ENCODE measurements at regions of chr9 and their contacts with region 1.

Region 1: GRCh38 chr9:96217754-96218693 is 84.0 kb downstream of the HSD17B3 start:
- DNase-seq: peak; percentile 59 to 82
- ATAC-seq: peak; percentile 89 to 95 (median 92)
- H3K4me3 ChIP-seq: peak overlapping the region in 9 of 10 donors; percentile 12 to 48 (median 40)
- H3K27ac ChIP-seq: peak overlapping the region in 9 of 10 donors; percentile 13 to 76 (median 37)
- H3K4me1 ChIP-seq: peaks cover 5 to 34% (median 20%) of the 10 kb centered on the region in 9 donors
- H3K27me3 ChIP-seq: peaks cover 0 to 57% (median 49%) of the 10 kb centered on the region in 7 donors
- CTCF ChIP-seq: peak; percentile 93 to 99 (median 96)

Region 2: DNA sequence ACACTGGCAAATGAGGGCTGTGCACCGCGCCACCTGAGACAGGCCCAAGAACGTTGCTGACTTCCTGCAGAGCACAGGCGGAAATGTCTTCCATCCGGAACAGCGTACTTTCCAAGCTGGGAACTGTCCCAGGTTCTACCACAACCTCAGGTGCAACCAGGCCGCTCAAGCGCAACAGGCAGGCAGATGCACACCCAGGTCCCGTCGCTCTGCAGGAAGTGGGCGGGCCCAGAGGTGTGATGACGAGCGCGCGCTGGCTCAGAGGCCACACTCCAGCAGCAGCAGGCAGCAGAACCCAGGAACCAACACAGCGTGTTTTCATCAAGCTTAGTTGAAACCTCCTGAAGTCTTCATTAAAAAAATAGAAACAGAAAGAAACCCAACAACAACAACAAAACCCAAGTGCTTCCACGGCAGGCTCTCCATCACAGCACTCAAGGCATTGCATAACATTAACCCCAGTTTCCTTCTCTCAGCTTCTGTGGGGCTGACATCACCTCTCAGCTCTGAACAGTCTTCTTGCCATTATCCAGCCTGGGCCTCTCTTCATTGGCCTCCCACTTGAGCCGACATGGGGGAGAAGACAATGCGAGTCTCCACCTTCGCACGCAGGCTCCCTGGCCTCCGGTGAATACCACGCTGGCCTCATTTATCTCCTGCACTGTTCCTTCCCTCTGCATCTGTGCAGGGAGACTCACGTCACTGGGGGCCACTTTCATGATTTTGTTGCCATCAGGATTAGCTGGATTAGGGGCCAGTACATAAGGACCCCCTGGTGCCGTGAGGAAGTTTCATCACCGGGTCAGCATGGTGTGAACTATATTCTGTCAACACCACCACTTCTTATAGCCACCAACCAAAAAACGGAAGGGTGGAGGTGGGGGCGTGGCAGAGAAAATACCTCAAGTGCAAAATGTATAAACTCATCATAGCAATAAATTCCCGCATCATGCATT is 723.3 kb before region 1 on chr9:
- intact Hi-C with region 1: loop called in 1 of 10 experiments (anchors 10 kb)
- DNase-seq: no peak
- ATAC-seq: peak in 5 of 8 donors; percentile 13 to 55 (median 26)
- H3K4me3 ChIP-seq: no peak overlapping the region
- H3K27ac ChIP-seq: peak overlapping the region in 1 of 10 donors; percentile 68
- H3K4me1 ChIP-seq: peaks cover 0 to 35% (median 8%) of the 10 kb centered on the region in 9 donors
- H3K27me3 ChIP-seq: peaks cover 0 to 4% (median 0%) of the 10 kb centered on the region in 7 donors
- CTCF ChIP-seq: no peak

Region 3: GRCh38 chr9:95726756-95727155 is 491.3 kb before region 1 on chr9:
- intact Hi-C with region 1: loop called in 9 of 10 experiments (anchors 2 to 10 kb)
- DNase-seq: no peak
- ATAC-seq: peak in 6 of 8 donors; percentile 42 to 53 (median 44)
- H3K4me3 ChIP-seq: no peak overlapping the region
- H3K27ac ChIP-seq: no peak overlapping the region
- H3K4me1 ChIP-seq: peaks cover 0 to 5% (median 0%) of the 10 kb centered on the region in 9 donors
- H3K27me3 ChIP-seq: peaks cover 0 to 21% (median 0%) of the 10 kb centered on the region in 7 donors
- CTCF ChIP-seq: peak; percentile 44 to 78 (median 71)

Region 4: DNA sequence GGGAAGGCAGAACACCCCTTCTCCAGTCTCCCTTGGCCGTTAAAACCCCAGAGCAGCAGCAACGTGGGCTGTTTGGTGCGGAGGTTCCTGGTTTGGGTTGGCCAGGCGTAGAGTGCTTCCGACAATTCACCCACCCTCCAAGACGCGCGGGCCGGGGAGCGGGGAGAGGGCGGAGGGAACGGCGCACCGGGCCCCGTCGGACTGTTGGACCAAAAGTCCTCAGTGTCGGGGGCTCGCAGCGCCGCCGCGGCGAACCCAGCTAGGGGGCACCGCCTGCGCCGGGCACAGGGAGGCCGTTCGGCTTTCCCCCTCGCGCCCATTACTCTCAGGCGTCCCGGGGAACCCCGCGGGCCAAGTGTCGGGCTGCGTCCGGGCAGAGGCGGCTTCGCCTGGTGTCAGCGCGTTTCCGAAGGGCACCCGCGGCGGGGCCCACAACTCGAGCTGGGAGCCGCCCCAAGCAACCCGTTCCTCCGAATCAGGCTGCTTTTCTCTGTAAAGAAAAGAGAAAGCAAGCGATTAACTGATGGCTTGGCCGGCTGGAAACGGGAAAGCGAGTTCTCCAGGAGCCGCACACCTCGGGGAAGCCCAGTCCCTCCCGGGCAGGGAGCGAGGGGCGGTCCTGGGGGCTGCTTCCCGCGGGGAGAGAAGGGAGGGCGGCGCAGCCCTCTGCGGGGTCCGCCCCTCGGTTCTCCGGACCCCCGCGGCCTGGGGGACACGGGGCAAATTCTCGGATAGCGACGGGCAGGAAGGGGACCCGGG is 197.1 kb before region 1 on chr9:
- intact Hi-C with region 1: loop called in 1 of 10 experiments (anchors 10 kb)
- DNase-seq: peak; percentile 39 to 46
- ATAC-seq: peak; percentile 53 to 76 (median 66)
- H3K4me3 ChIP-seq: peak overlapping the region; percentile 44 to 80 (median 62)
- H3K27ac ChIP-seq: peak overlapping the region; percentile 48 to 83 (median 72)
- H3K4me1 ChIP-seq: peaks cover 7 to 33% (median 25%) of the 10 kb centered on the region in 9 donors
- H3K27me3 ChIP-seq: peaks cover 0 to 72% (median 45%) of the 10 kb centered on the region in 7 donors
- CTCF ChIP-seq: no peak

Region 5: DNA sequence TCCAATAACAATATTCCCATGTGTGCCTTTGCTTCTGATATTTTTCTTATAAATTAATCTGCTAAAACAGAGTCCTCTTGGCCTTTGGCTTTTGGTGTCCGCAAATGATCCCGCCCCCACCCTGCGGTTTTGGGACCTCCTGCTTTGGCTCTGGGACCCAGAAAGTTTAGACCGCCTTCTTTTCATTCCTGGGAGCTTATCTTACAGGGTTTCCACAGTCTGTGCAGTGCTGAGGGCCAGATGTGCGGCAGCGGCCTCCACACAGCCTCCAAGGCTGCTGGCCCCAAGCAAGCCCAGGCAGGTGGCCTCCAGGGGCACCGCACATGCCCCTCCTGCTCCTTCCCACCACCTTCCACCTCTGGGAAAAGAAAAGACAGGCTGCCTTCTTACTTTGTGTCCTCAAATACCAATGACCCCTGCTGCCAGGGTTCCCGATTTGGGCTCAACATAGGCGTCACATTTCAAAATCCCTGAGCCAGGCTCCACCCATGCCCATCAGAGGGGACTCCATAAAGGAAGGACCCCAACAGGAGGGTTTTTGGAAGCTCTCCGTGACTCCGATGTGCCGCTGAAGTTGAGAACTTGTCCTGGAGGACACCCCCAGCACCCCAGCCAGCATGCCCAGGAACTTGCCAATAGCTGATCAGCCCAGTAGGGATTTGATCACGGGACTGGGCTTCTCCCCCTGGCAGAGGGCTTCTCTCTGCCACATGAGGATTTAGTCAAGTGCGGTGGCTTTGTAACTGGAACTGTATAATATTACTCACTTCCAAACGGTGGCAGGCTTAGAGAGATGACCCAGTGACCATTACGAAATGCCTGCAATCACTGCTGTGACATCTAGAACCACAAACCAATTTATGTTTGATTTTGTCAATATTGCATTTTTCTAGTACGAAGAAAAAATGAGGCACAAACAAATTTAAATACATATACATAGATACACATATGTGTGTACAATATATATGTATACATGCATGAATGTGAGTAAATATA is 150.7 kb before region 1 on chr9:
- intact Hi-C with region 1: loop called in 2 of 10 experiments (anchors 5 to 10 kb)
- DNase-seq: peak; percentile 50 to 57
- ATAC-seq: peak; percentile 37 to 84 (median 65)
- H3K4me3 ChIP-seq: no peak overlapping the region
- H3K27ac ChIP-seq: peak overlapping the region in 4 of 10 donors; percentile 5 to 27 (median 10)
- H3K4me1 ChIP-seq: peaks cover 0 to 14% (median 3%) of the 10 kb centered on the region in 9 donors
- H3K27me3 ChIP-seq: peaks cover 0 to 7% (median 0%) of the 10 kb centered on the region in 7 donors
- CTCF ChIP-seq: no peak

Region 6: GRCh38 chr9:96169484-96169883 is 48.5 kb before region 1 on chr9:
- intact Hi-C with region 1: no loop called
- DNase-seq: peak in 1 of 2 donors; percentile 35
- ATAC-seq: peak in 2 of 8 donors; percentile 13 to 34
- H3K4me3 ChIP-seq: no peak overlapping the region
- H3K27ac ChIP-seq: peak overlapping the region in 1 of 10 donors; percentile 56
- H3K4me1 ChIP-seq: no peaks in the 10 kb centered on the region
- H3K27me3 ChIP-seq: peaks cover 0 to 67% (median 21%) of the 10 kb centered on the region in 7 donors
- CTCF ChIP-seq: no peak

Region 7: DNA sequence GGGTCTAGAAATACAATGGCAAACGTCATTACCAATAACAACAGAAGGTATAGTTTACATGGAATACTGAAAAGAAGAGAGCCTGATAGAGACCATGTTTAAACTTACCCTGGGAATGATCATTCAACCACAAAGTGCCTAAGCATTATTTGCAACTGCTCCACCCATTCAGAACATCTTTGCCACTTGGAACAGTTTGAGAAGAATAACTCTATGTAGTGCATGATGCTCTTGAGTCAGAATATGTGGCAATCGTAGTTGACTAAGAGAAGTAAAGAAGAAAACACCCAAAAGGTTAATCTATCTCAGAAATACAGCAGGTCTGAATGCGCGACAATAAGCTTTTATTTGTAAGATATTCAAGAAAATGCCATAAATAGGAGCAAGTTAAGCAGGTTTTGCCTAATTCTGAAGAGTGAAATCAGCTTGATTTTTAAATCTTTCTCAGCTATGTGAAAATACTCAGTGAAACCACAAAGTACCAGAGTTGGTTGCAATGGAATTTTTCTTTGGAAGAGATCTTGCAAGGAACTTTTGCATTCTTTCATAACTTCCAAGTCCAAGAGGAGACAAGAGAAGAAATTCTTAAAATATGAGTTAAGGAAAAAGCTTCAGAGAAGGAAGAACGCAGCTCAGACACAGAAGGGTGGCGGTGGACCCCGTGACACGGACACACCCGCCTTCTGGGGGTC is 296.2 kb after region 1 on chr9:
- intact Hi-C with region 1: no loop called
- DNase-seq: no peak
- ATAC-seq: peak in 2 of 8 donors; percentile 31 to 73
- H3K4me3 ChIP-seq: no peak overlapping the region
- H3K27ac ChIP-seq: peak overlapping the region in 7 of 10 donors; percentile 17 to 63 (median 36)
- H3K4me1 ChIP-seq: peaks cover 0 to 41% (median 13%) of the 10 kb centered on the region in 9 donors
- H3K27me3 ChIP-seq: no peaks in the 10 kb centered on the region
- CTCF ChIP-seq: no peak